H1 (cell line): ENCODE measurements at regions of chr15 and their contacts with region 1.

Region 1: GRCh38 chr15:40506964-40507571 is 36.3 kb downstream of the CHST14 start:
- DNase-seq: peak in 1 of 2 experiments; percentile 87
- H3K4me3 ChIP-seq: peak overlapping the region in 3 of 4 experiments; percentile 14 to 55 (median 36); a peak in 5 of 8 replicates
- H3K27ac ChIP-seq: no peak overlapping the region
- H3K4me1 ChIP-seq: peaks cover 4 to 8% (median 6%) of the 10 kb centered on the region in 4 experiments; a peak in 6 of 7 replicates
- H3K27me3 ChIP-seq: peaks cover 0 to 25% (median 18%) of the 10 kb centered on the region in 4 experiments; a peak in 6 of 7 replicates
- CTCF ChIP-seq: peak; percentile 70 to 85 (median 77)
- EP300 ChIP-seq: no peak
- POLR2A ChIP-seq: no peak
- RAD21 ChIP-seq: peak; percentile 67 to 76

Region 2: DNA sequence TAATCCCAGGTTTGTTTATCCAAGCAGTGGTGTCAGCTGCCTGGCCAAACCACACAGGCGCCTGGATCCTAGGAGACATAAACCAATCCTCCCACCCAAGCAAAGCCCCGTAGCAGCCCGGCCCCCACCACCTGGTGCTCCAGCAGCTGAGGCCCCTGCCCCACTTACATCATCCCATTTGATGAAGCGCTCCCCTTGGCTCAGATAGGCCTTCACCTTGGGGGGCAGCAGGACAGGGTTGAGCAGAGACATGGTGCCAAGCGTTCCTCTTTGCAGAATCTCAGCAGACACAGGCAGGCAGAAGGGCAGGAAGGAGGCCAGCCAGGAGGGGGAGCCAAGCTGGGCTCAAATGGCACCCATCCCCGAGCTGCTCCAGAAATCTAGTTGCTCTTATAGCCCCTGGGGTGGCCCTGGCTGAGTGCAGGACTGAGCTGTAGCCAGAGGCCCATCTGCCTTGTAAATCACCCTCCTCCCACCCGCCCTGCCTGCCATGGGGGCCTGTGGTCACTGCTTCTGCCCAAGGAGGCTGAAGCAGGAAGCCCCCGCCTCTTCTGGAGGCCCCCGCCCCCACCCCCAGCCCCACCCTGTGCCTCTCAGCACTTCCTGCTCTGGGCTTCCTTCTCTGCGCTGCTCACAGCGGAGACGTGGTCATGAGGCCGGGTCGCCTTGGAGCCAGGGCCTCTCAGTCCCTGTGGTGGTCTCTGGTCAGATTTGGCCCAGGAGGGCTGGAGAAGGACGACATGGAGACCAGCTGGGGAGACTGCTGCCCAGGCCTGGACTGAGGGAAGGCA is 199.5 kb before region 1 on chr15 and contains the start of gene PLCB2:
- CTCF ChIA-PET with region 1: no interaction called
- POLR2A ChIA-PET with region 1: no interaction called
- DNase-seq: no peak
- H3K4me3 ChIP-seq: 0 out of 8 replicates have a peak within 1 kb of the TSS, but pooled peaks of 1 of the 4 experiments have one; percentile 19
- H3K27ac ChIP-seq: no peak within 1 kb of the TSS
- H3K4me1 ChIP-seq: peaks cover 0 to 29% (median 21%) of the 10 kb centered on the region in 4 experiments; a peak in 6 of 7 replicates
- H3K27me3 ChIP-seq: peaks cover 0 to 6% (median 0%) of the 10 kb centered on the region in 4 experiments; a peak in 3 of 7 replicates
- CTCF ChIP-seq: peak; percentile 30 to 60 (median 52); a peak in 3 of 4 replicates
- EP300 ChIP-seq: no peak
- POLR2A ChIP-seq: no peak
- RAD21 ChIP-seq: peak in 1 of 2 experiments; percentile 24; a peak in 1 of 4 replicates
- total RNA-seq, gene PLCB2: 8.4 and 9.4 TPM in 2 replicates

Region 3: DNA sequence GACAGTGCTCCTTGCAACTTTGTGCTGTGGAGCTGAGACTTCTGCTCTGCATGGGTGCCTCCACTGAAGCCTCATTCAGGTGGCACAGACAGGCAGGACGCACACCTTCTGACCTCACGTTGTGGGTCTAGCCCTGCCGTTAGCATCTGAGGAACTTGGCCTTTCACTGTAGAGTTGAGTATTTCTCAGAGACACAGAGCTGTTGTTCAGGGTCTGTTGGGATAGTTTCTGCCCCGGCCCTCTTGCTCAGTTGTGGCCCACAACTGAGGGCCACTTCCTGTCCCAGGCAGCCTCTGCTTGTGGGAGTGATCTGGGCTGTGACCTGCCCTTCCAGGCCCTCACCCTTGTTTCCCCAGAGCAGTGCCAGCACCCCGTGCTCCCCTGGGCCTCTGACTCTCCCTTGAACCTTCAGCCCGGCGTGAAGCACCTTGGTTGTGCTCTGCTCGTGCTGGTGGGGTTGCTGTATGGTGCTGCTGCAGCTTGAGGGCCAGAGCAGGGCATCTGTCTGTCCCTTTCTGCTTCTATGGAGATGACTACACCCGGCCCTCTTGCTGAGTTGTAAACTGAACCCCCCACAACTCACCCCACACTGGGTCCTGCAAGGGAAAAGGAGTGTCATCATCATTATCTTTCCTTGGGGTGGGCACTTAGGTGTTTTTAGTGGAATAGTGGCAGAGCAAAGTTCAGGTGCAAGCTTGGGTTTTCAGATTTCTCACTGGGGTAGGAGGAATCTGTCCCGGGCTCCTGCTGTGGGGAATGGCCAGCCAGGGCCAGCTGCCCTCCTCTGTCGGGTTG is 54.6 kb before region 1 on chr15:
- CTCF ChIA-PET with region 1: interaction called, 26 read pairs
- POLR2A ChIA-PET with region 1: interaction called, 3 read pairs
- DNase-seq: no peak
- H3K4me3 ChIP-seq: no peak overlapping the region; a peak in 1 of 8 replicates
- H3K27ac ChIP-seq: no peak overlapping the region; the same call in 1 of the 2 replicates
- H3K4me1 ChIP-seq: peaks cover 4 to 41% (median 19%) of the 10 kb centered on the region in 4 experiments
- H3K27me3 ChIP-seq: no peaks in the 10 kb centered on the region
- CTCF ChIP-seq: no peak
- EP300 ChIP-seq: no peak
- POLR2A ChIP-seq: no peak
- RAD21 ChIP-seq: no peak

Region 4: DNA sequence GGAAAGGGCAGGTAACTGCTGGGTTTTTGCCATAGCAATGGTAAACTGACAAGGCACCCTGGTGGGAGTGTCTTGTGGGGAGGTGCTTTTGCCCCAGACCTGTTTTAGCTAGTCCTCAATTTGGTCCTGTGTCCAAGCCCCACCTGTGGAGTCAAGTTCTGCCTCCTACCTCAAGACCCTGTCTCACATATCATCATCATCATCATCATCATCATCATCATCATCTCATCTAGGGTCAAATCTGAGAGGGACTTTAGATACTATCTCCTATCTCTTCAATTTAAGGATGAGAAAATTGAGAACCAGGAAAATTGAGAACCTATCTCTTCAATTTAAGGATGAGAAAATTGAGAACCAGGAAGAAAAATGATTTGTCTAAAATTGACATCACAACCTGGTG is 96.9 kb after region 1 on chr15:
- CTCF ChIA-PET with region 1: no interaction called
- POLR2A ChIA-PET with region 1: no interaction called
- DNase-seq: no peak
- H3K4me3 ChIP-seq: no peak overlapping the region
- H3K27ac ChIP-seq: no peak overlapping the region
- H3K4me1 ChIP-seq: no peaks in the 10 kb centered on the region
- H3K27me3 ChIP-seq: no peaks in the 10 kb centered on the region
- CTCF ChIP-seq: no peak
- EP300 ChIP-seq: no peak
- POLR2A ChIP-seq: no peak
- RAD21 ChIP-seq: no peak